ENCODE measurements at regions of chr12 and their contacts with region 1.

Region 1: GRCh38 chr12:94660436-94660835 is 10.1 kb upstream of the TMCC3 start:
- DNase-seq: no peak
- H3K4me3 ChIP-seq: no peak overlapping the region
- H3K27ac ChIP-seq: no peak overlapping the region
- H3K4me1 ChIP-seq: peaks cover 10% of the 10 kb centered on the region
- H3K27me3 ChIP-seq: no peaks in the 10 kb centered on the region
- CTCF ChIP-seq: no peak

Region 2: GRCh38 chr12:94677775-94678174 is 17.3 kb after region 1 on chr12:
- CTCF ChIA-PET with region 1: no interaction called
- POLR2A ChIA-PET with region 1: interaction called, 14 read pairs
- intact Hi-C with region 1: no loop called
- DNase-seq: peak; percentile 33 to 91
- H3K4me3 ChIP-seq: no peak overlapping the region
- H3K27ac ChIP-seq: peak overlapping the region; percentile 45
- H3K4me1 ChIP-seq: peaks cover 20% of the 10 kb centered on the region
- H3K27me3 ChIP-seq: no peaks in the 10 kb centered on the region
- CTCF ChIP-seq: no peak